CD8-positive, alpha-beta T cell (primary cell): ENCODE measurements at regions of chr17 and their contacts with region 1.

Region 1: GRCh38 chr17:2814481-2815341 is 18.5 kb downstream of the RAP1GAP2 start:
- DNase-seq: peak; percentile 88 to 98 (median 96)
- ATAC-seq: peak; percentile 77
- H3K4me3 ChIP-seq: peak overlapping the region; percentile 52 to 64
- H3K4me3 Mint-ChIP-seq: peak overlapping the region; percentile 79
- H3K27ac ChIP-seq: peak overlapping the region; percentile 66 to 76
- H3K27ac Mint-ChIP-seq: peak overlapping the region; percentile 94
- H3K4me1 ChIP-seq: peaks cover 34% of the 10 kb centered on the region
- H3K4me1 Mint-ChIP-seq: peaks cover 31% of the 10 kb centered on the region
- H3K27me3 ChIP-seq: no peaks in the 10 kb centered on the region
- H3K27me3 Mint-ChIP-seq: no peaks in the 10 kb centered on the region
- CTCF ChIP-seq: no peak

Region 2: GRCh38 chr17:2253768-2254406 is 560.8 kb before region 1 on chr17:
- CTCF ChIA-PET with region 1: no interaction called
- POLR2A ChIA-PET with region 1: no interaction called
- intact Hi-C with region 1: no loop called
- DNase-seq: peak in 1 of 9 experiments; percentile 33
- ATAC-seq: peak; percentile 36
- H3K4me3 ChIP-seq: no peak overlapping the region
- H3K4me3 Mint-ChIP-seq: no peak overlapping the region
- H3K27ac ChIP-seq: peak overlapping the region in 1 of 2 experiments; percentile 3
- H3K27ac Mint-ChIP-seq: peak overlapping the region; percentile 84
- H3K4me1 ChIP-seq: peaks cover 54% of the 10 kb centered on the region
- H3K4me1 Mint-ChIP-seq: peaks cover 61% of the 10 kb centered on the region
- H3K27me3 ChIP-seq: no peaks in the 10 kb centered on the region
- H3K27me3 Mint-ChIP-seq: no peaks in the 10 kb centered on the region
- CTCF ChIP-seq: no peak

Region 3: GRCh38 chr17:2711601-2712299 is 103.0 kb before region 1 on chr17 and contains the start of gene CLUH:
- CTCF ChIA-PET with region 1: no interaction called
- POLR2A ChIA-PET with region 1: no interaction called
- intact Hi-C with region 1: loop called in 1 of 2 experiments (anchors 1 kb)
- DNase-seq: peak; percentile 90 to 98 (median 94)
- ATAC-seq: peak; percentile 93
- H3K4me3 ChIP-seq: peak within 1 kb of the TSS; percentile 64 to 84
- H3K4me3 Mint-ChIP-seq: peak within 1 kb of the TSS; percentile 88
- H3K27ac ChIP-seq: peak within 1 kb of the TSS; percentile 41 to 47
- H3K27ac Mint-ChIP-seq: peak within 1 kb of the TSS; percentile 77
- H3K4me1 ChIP-seq: peaks cover 45% of the 10 kb centered on the region
- H3K4me1 Mint-ChIP-seq: peaks cover 35% of the 10 kb centered on the region
- H3K27me3 ChIP-seq: no peaks in the 10 kb centered on the region
- H3K27me3 Mint-ChIP-seq: no peaks in the 10 kb centered on the region
- CTCF ChIP-seq: no peak
- total RNA-seq, gene CLUH: 50.8 to 51.1 TPM

Region 4: GRCh38 chr17:2749784-2750181 is 64.9 kb before region 1 on chr17:
- CTCF ChIA-PET with region 1: no interaction called
- POLR2A ChIA-PET with region 1: no interaction called
- intact Hi-C with region 1: loop called in 1 of 2 experiments (anchors 2 kb)
- DNase-seq: peak; percentile 55 to 84 (median 65)
- ATAC-seq: peak; percentile 98
- H3K4me3 ChIP-seq: no peak overlapping the region
- H3K4me3 Mint-ChIP-seq: no peak overlapping the region
- H3K27ac ChIP-seq: no peak overlapping the region
- H3K27ac Mint-ChIP-seq: no peak overlapping the region
- H3K4me1 ChIP-seq: no peaks in the 10 kb centered on the region
- H3K4me1 Mint-ChIP-seq: peaks cover 1% of the 10 kb centered on the region
- H3K27me3 ChIP-seq: peaks cover 5 to 7% of the 10 kb centered on the region in 2 experiments
- H3K27me3 Mint-ChIP-seq: peaks cover 47% of the 10 kb centered on the region
- CTCF ChIP-seq: no peak

Region 5: DNA sequence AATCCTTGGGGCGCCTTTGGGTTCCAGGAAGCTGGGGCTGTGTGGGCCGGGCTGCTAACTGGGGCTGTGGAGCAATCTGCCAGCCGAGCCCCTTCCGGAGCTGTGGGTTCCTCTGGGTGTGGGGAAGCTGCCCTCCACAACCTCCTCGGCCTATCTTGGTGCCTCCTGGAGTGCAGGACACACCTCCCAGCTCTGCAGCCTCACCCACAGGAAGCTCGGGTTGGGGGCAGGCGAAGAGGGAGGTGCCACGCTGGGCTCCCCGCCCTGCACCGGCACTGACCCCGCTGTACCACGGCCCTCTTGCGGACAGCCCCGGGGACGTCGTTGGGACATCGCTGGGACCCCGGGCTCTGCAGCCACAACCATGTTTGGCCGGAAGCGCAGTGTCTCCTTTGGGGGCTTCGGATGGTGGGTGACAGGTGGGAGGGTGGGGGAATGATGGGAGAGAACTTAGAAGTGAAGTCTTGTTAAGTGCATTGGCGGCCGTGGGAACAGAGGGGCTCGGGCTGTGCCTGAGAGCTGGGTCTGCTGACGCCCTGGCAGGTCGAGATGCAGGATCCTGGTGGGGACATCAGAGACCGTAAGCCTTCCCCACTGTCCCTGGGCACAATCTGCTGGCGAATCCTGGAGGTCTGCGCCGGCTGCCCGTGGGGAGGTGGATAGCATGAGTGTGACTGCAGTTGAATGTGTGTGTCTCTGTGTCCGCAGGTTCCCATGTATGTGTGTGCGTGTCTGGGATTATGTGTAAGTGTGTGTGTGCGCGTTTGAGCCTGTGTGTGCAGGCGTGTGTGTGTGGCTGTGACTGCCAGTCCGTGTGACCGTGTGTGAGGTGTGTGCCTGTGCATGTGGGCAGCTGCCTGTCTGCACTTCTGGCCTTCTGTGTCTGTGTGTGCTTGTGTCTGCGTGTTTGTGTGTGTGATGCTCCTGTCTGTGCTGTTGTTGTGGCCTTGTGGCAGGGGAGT is 18.3 kb before region 1 on chr17 and contains the start of gene RAP1GAP2:
- CTCF ChIA-PET with region 1: interaction called, 20 read pairs
- POLR2A ChIA-PET with region 1: interaction called, 49 read pairs
- intact Hi-C with region 1: loop called (anchors 1 kb)
- DNase-seq: peak; percentile 44 to 92 (median 78)
- ATAC-seq: peak; percentile 81
- H3K4me3 ChIP-seq: peak within 1 kb of the TSS; percentile 56 to 82
- H3K4me3 Mint-ChIP-seq: peak within 1 kb of the TSS; percentile 86
- H3K27ac ChIP-seq: peak within 1 kb of the TSS; percentile 6 to 30
- H3K27ac Mint-ChIP-seq: peak within 1 kb of the TSS; percentile 78
- H3K4me1 ChIP-seq: peaks cover 74% of the 10 kb centered on the region
- H3K4me1 Mint-ChIP-seq: peaks cover 73% of the 10 kb centered on the region
- H3K27me3 ChIP-seq: no peaks in the 10 kb centered on the region
- H3K27me3 Mint-ChIP-seq: peaks cover 5% of the 10 kb centered on the region
- CTCF ChIP-seq: no peak
- total RNA-seq, gene RAP1GAP2: 18.9 to 19.9 TPM

Region 6: GRCh38 chr17:2828397-2829038 is 13.8 kb after region 1 on chr17:
- CTCF ChIA-PET with region 1: interaction called, 19 read pairs
- POLR2A ChIA-PET with region 1: interaction called, 8 read pairs
- intact Hi-C with region 1: loop called (anchors 1 kb)
- DNase-seq: peak; percentile 52 to 87 (median 79)
- ATAC-seq: peak; percentile 87
- H3K4me3 ChIP-seq: peak overlapping the region in 1 of 2 experiments; percentile 37
- H3K4me3 Mint-ChIP-seq: peak overlapping the region; percentile 22
- H3K27ac ChIP-seq: no peak overlapping the region
- H3K27ac Mint-ChIP-seq: no peak overlapping the region
- H3K4me1 ChIP-seq: peaks cover 9% of the 10 kb centered on the region
- H3K4me1 Mint-ChIP-seq: peaks cover 25% of the 10 kb centered on the region
- H3K27me3 ChIP-seq: no peaks in the 10 kb centered on the region
- H3K27me3 Mint-ChIP-seq: peaks cover 19% of the 10 kb centered on the region
- CTCF ChIP-seq: peak; percentile 95

Region 7: DNA sequence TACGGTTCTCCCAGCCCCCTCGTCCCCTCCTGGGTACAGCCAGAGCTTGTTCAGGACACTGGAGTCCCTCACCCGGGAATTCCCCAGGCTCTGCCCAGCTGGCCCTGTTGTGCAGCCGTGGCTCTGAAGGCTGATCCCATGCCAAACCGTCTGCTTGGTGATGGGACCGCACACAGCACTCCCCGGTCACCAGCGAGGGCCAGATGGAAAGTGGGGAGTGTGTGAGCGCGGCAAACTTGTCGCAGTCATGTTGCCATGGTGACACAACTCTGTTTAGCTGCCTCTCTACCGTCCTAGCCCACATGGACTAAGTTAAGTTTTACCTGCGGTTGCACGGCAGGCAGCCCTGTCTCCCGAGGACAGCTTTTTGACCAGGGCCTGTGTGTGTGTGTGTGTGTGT is 89.4 kb after region 1 on chr17:
- CTCF ChIA-PET with region 1: no interaction called
- POLR2A ChIA-PET with region 1: no interaction called
- intact Hi-C with region 1: no loop called
- DNase-seq: peak in 1 of 9 experiments; percentile 14
- ATAC-seq: no peak
- H3K4me3 ChIP-seq: no peak overlapping the region
- H3K4me3 Mint-ChIP-seq: no peak overlapping the region
- H3K27ac ChIP-seq: no peak overlapping the region
- H3K27ac Mint-ChIP-seq: no peak overlapping the region
- H3K4me1 ChIP-seq: no peaks in the 10 kb centered on the region
- H3K4me1 Mint-ChIP-seq: peaks cover 5% of the 10 kb centered on the region
- H3K27me3 ChIP-seq: no peaks in the 10 kb centered on the region
- H3K27me3 Mint-ChIP-seq: no peaks in the 10 kb centered on the region
- CTCF ChIP-seq: no peak

Region 8: DNA sequence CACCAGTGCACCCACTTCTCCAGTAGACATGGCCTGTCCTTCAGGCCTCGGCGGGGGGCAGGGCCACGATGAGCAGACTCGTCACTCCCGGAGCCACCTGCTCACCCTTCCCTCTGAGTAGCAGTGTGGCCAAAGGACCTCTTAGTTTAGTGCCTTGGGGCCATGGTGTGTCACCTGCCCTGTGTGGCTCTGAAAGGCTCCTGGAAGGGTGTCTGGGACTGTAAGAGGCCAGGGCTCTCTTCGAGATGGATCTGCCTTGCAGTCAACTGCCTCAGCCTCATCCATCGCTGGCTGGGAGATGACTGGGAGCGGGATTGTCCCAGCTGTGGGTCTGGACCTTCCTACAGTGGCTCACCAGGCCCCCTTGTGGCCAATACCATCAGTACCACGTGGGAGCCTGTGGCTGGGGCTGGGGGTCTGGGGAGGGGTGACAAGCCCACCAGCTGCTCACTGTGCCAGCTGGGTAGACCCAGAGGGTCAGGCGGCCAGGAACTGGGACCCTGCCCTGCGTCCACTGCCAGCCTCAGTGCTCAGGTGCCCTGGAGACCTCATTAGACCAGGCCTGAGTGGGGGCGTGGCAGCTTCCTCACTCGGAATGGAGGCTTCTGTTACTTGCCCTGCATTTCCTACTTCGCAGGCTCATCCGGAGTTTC is 115.3 kb after region 1 on chr17:
- CTCF ChIA-PET with region 1: no interaction called
- POLR2A ChIA-PET with region 1: no interaction called
- intact Hi-C with region 1: no loop called
- DNase-seq: peak in 5 of 9 experiments; percentile 15 to 62 (median 35)
- ATAC-seq: no peak
- H3K4me3 ChIP-seq: no peak overlapping the region
- H3K4me3 Mint-ChIP-seq: no peak overlapping the region
- H3K27ac ChIP-seq: no peak overlapping the region
- H3K27ac Mint-ChIP-seq: no peak overlapping the region
- H3K4me1 ChIP-seq: peaks cover 7% of the 10 kb centered on the region
- H3K4me1 Mint-ChIP-seq: peaks cover 14% of the 10 kb centered on the region
- H3K27me3 ChIP-seq: no peaks in the 10 kb centered on the region
- H3K27me3 Mint-ChIP-seq: no peaks in the 10 kb centered on the region
- CTCF ChIP-seq: peak; percentile 48

Region 9: GRCh38 chr17:2975469-2975958 is 160.8 kb after region 1 on chr17:
- CTCF ChIA-PET with region 1: no interaction called
- POLR2A ChIA-PET with region 1: no interaction called
- intact Hi-C with region 1: no loop called
- DNase-seq: peak in 1 of 9 experiments; percentile 9
- ATAC-seq: no peak
- H3K4me3 ChIP-seq: no peak overlapping the region
- H3K4me3 Mint-ChIP-seq: no peak overlapping the region
- H3K27ac ChIP-seq: no peak overlapping the region
- H3K27ac Mint-ChIP-seq: no peak overlapping the region
- H3K4me1 ChIP-seq: no peaks in the 10 kb centered on the region
- H3K4me1 Mint-ChIP-seq: no peaks in the 10 kb centered on the region
- H3K27me3 ChIP-seq: no peaks in the 10 kb centered on the region
- H3K27me3 Mint-ChIP-seq: no peaks in the 10 kb centered on the region
- CTCF ChIP-seq: no peak

Region 10: DNA sequence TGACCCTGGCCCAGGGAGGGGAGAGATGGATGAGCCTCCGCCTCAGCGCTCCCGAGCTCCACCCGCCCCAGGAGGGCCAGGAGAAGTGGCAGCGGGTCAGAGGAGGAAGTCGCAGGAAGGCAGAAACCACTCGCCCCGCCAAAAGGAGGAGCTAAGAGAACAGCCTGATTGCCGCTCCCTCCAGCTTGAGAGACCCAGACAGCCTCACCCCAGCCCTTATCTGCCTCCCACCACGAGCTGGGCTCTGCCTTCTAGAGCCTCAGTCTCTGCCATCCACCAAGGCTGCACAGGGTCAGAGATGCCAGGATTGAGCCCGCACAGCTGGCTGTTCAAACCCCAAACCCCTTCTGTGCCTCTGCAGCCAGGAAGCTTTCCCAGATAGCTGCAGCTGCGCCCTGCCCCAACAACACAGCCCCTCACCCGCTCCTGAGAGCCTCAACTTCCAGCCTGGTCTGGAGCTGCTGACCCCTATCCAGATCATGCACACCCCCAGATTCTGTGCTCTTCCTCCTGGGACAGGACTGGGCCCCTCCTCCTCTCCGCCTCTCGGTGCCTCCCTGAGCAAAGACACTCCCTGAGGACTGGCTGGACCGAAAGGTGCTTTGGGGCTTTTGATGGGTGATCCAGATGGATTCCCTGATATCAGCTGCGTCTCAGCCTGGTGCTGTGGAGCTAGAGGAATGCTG is 1150.5 kb after region 1 on chr17:
- CTCF ChIA-PET with region 1: no interaction called
- POLR2A ChIA-PET with region 1: no interaction called
- intact Hi-C with region 1: loop called in 1 of 2 experiments (anchors 5 kb)
- DNase-seq: peak; percentile 33 to 81 (median 73)
- ATAC-seq: peak; percentile 51
- H3K4me3 ChIP-seq: peak overlapping the region; percentile 71 to 83
- H3K4me3 Mint-ChIP-seq: peak overlapping the region; percentile 91
- H3K27ac ChIP-seq: peak overlapping the region; percentile 76 to 77
- H3K27ac Mint-ChIP-seq: peak overlapping the region; percentile 94
- H3K4me1 ChIP-seq: peaks cover 39% of the 10 kb centered on the region
- H3K4me1 Mint-ChIP-seq: peaks cover 40% of the 10 kb centered on the region
- H3K27me3 ChIP-seq: no peaks in the 10 kb centered on the region
- H3K27me3 Mint-ChIP-seq: no peaks in the 10 kb centered on the region
- CTCF ChIP-seq: no peak